ENCODE measurements at regions of chr7 and their contacts with region 1.

Region 1: GRCh38 chr7:56009695-56010094 is 41.5 kb downstream of the PSPH start:
- DNase-seq: no peak
- ATAC-seq: no peak
- H3K4me3 ChIP-seq: no peak overlapping the region
- H3K27ac ChIP-seq: no peak overlapping the region
- H3K4me1 ChIP-seq: no peaks in the 10 kb centered on the region
- H3K27me3 ChIP-seq: no peaks in the 10 kb centered on the region
- CTCF ChIP-seq: no peak
- POLR2A ChIP-seq: no peak
- RAD21 ChIP-seq: no peak

Region 2: GRCh38 chr7:56033671-56034432 is 24.2 kb after region 1 on chr7:
- CTCF ChIA-PET with region 1: no interaction called
- POLR2A ChIA-PET with region 1: no interaction called
- dilution Hi-C with region 1: no loop called
- in situ Hi-C with region 1: no loop called
- intact Hi-C with region 1: loop called (anchors 2 kb)
- DNase-seq: peak; percentile 70
- ATAC-seq: peak; percentile 91
- H3K4me3 ChIP-seq: peak overlapping the region; percentile 80
- H3K27ac ChIP-seq: peak overlapping the region; percentile 68
- H3K4me1 ChIP-seq: peaks cover 6% of the 10 kb centered on the region
- H3K27me3 ChIP-seq: no peaks in the 10 kb centered on the region
- CTCF ChIP-seq: peak; percentile 30; the same call in 1 of the 2 replicates
- POLR2A ChIP-seq: no peak
- RAD21 ChIP-seq: peak; percentile 29

Region 3: DNA sequence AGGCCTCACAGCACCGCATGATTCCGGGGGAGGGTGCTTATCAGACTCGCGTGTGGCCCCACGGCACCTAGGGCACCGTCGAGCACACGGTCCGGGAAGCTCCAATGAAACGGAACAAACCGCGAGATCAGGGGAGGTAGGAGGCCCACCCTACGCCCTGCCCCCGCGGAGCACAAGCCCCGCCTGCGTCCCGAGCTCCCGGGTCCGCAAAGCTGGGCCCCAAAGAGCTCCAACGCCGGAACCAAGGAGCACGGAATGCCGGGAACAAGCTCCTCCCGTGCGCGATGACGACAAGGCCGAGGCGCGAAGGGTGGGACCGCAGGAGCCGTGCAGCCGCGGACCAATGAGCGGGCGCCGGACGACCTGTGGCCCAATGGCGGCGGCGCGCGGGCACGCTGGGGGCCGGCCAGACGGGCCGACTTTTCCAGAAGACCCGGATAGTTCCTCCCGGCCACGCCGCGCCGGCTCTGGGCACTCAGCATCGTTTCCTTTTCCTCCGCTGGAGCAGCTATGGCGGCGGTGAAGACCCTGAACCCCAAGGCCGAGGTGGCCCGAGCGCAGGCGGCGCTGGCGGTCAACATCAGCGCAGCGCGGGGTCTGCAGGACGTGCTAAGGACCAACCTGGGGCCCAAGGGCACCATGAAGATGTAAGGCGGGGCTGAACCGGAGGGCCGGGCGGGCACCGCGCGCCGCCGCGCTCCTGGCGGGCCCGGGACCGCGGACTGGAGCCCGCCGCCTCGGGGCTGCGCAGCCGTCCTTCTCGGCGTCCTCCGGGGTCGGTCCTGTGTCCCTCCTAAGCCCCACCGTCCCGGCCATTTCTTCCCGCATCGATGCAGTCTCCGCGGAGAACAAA is 41.9 kb after region 1 on chr7 and contains the starts of genes CCT6A and PSPH:
- CTCF ChIA-PET with region 1: interaction called, 3 read pairs
- POLR2A ChIA-PET with region 1: no interaction called
- dilution Hi-C with region 1: no loop called
- in situ Hi-C with region 1: no loop called
- intact Hi-C with region 1: loop called (anchors 5 kb)
- DNase-seq: peak; percentile 98
- ATAC-seq: peak; percentile 95
- H3K4me3 ChIP-seq: peak within 1 kb of the TSS; percentile 81
- H3K27ac ChIP-seq: peak within 1 kb of the TSS; percentile 92
- H3K4me1 ChIP-seq: peaks cover 7% of the 10 kb centered on the region; the same call in 1 of the 2 replicates
- H3K27me3 ChIP-seq: no peaks in the 10 kb centered on the region
- CTCF ChIP-seq: no peak
- POLR2A ChIP-seq: peak; percentile 88
- RAD21 ChIP-seq: no peak
- total RNA-seq, gene CCT6A: 265 and 311 TPM in 2 replicates
- total RNA-seq, gene PSPH: 48.4 and 55.8 TPM in 2 replicates

Region 4: GRCh38 chr7:56074371-56074791 is 64.7 kb after region 1 on chr7:
- CTCF ChIA-PET with region 1: interaction called, 3 read pairs
- POLR2A ChIA-PET with region 1: no interaction called
- dilution Hi-C with region 1: no loop called
- in situ Hi-C with region 1: loop called (anchors 5 kb)
- intact Hi-C with region 1: loop called (anchors 1 kb)
- DNase-seq: peak; percentile 72
- ATAC-seq: peak; percentile 95
- H3K4me3 ChIP-seq: no peak overlapping the region
- H3K27ac ChIP-seq: no peak overlapping the region
- H3K4me1 ChIP-seq: peaks cover 8% of the 10 kb centered on the region; the same call in 1 of the 2 replicates
- H3K27me3 ChIP-seq: no peaks in the 10 kb centered on the region
- CTCF ChIP-seq: peak; percentile 96
- POLR2A ChIP-seq: 0 out of 2 replicates have a peak, but pooled peaks have one; percentile 31
- RAD21 ChIP-seq: peak; percentile 95

Region 5: DNA sequence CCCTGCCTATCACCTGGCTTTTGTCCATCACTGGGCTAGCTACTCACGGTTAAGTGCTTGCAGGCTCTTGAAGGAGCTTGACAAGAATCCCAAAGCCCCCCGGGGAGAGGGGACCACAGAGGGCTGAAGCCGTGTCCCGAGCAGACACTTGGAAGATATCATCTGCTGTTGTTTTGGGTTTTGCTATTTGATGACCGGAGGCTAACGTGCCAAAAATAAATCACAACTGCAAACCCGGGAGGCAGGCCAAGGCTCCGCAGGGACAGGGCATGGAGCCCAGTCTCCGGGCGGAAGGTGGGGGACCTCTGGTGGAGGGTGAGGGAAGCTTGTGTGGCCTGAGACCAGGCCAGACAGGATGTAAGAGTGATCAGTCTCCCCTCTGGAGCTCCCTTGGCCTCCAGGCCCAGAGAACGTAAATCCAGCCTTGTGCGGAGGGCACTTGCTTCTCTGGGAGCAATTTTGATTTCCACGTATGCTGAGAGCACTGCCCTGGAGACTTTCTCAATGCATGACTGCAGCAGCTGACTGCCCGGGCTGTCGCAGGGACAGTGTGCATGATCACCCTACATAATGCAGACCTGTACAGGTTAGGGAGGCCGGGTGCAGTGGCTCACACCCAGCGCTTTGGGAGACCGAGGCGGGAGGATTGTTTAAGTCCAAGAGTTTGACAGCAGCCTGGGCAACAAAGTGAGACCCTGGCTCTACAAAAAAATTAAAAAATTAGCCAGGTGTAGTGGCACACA is 83.3 kb after region 1 on chr7 and contains the start of gene PHKG1:
- CTCF ChIA-PET with region 1: no interaction called
- POLR2A ChIA-PET with region 1: no interaction called
- dilution Hi-C with region 1: no loop called
- in situ Hi-C with region 1: no loop called
- intact Hi-C with region 1: loop called (anchors 1 kb)
- DNase-seq: peak; percentile 81
- ATAC-seq: peak; percentile 94
- H3K4me3 ChIP-seq: no peak within 1 kb of the TSS
- H3K27ac ChIP-seq: peak within 1 kb of the TSS; percentile 15; the same call in 1 of the 2 replicates
- H3K4me1 ChIP-seq: peaks cover 9% of the 10 kb centered on the region
- H3K27me3 ChIP-seq: no peaks in the 10 kb centered on the region
- CTCF ChIP-seq: peak; percentile 27
- POLR2A ChIP-seq: no peak
- RAD21 ChIP-seq: peak; percentile 38
- total RNA-seq, gene PHKG1: under 0.01 and 0.72 TPM in 2 replicates